IMR-90 (cell line): ENCODE measurements at regions of chr12 and their contacts with region 1.

Region 1: DNA sequence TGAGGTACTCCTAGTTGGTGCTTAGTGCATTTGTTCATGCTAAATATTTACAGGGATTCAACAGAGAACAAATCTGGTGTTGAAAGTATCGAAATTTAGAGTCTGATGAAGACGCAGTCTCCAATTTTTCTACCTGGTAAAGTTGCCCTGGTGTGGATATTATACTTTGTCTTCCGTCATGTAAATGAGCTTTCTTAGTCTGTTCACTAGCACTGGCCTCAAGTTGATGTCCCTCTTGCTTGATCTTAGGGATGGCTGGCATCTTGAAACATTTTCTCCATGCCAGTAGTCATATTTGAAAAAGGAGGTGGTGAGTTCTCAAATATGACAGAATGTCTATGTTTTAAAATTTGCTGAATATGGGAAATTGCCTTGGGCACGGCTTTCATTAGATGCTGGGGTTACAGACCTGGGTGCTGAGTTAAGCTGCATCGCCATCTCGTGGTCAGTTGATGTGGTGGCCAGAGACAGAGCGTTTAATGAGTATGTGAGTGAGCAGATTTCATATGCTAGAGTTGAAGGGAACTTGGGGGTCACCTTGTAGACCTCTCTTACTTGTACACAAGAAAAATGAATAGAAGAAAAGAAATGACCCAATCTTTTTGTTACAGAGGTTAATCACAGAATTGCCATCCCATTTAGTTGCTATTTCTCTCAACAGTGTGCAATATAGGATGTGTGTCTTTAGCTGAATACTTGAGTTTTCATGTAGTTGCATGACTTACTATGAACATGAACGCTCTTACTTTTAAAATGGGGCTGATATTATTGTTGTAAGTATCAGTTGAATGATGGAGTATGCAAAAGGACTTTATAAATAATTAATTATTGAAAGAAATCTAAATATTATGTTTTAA is 172.8 kb upstream of the DCN start:
- DNase-seq: peak; percentile 80
- ATAC-seq: peak; percentile 99
- H3K4me3 ChIP-seq: no peak overlapping the region
- H3K27ac ChIP-seq: no peak overlapping the region
- H3K4me1 ChIP-seq: no peaks in the 10 kb centered on the region
- H3K27me3 ChIP-seq: no peaks in the 10 kb centered on the region
- CTCF ChIP-seq: peak; percentile 96
- POLR2A ChIP-seq: no peak
- RAD21 ChIP-seq: peak; percentile 98

Region 2: GRCh38 chr12:90959538-90960139 is 395.7 kb before region 1 on chr12:
- CTCF ChIA-PET with region 1: interaction called, 4 read pairs
- POLR2A ChIA-PET with region 1: no interaction called
- dilution Hi-C with region 1: no loop called
- in situ Hi-C with region 1: no loop called
- intact Hi-C with region 1: loop called (anchors 1 kb)
- DNase-seq: peak; percentile 58
- ATAC-seq: peak; percentile 95
- H3K4me3 ChIP-seq: no peak overlapping the region
- H3K27ac ChIP-seq: no peak overlapping the region
- H3K4me1 ChIP-seq: no peaks in the 10 kb centered on the region
- H3K27me3 ChIP-seq: no peaks in the 10 kb centered on the region
- CTCF ChIP-seq: peak; percentile 71
- POLR2A ChIP-seq: no peak
- RAD21 ChIP-seq: peak; percentile 59

Region 3: GRCh38 chr12:90970473-90970872 is 384.9 kb before region 1 on chr12:
- CTCF ChIA-PET with region 1: interaction called, 5 read pairs
- POLR2A ChIA-PET with region 1: no interaction called
- dilution Hi-C with region 1: no loop called
- in situ Hi-C with region 1: loop called (anchors 5 kb)
- intact Hi-C with region 1: no loop called
- DNase-seq: peak; percentile 12
- ATAC-seq: no peak
- H3K4me3 ChIP-seq: no peak overlapping the region
- H3K27ac ChIP-seq: no peak overlapping the region
- H3K4me1 ChIP-seq: peaks cover 10% of the 10 kb centered on the region
- H3K27me3 ChIP-seq: no peaks in the 10 kb centered on the region
- CTCF ChIP-seq: no peak
- POLR2A ChIP-seq: no peak
- RAD21 ChIP-seq: no peak

Region 4: DNA sequence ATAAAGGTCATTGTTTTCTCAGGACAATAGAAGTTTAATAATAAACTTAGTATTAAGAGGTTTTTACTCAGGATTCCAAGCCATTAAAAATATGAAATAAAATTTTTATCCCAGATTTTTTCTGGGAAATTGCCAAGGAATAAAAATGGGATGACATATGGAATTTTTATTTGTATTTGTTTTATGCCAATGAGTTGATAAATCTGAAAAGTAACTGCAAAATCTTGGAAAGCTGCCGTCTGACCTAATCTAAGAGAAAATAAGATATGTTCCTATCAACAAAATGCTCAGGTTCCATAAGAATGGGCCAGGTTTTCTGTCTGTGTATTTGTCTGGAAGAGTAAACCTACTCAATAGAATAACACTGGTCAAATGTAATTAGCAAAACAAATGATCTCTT is 275.3 kb before region 1 on chr12:
- CTCF ChIA-PET with region 1: no interaction called
- POLR2A ChIA-PET with region 1: no interaction called
- dilution Hi-C with region 1: no loop called
- in situ Hi-C with region 1: no loop called
- intact Hi-C with region 1: no loop called
- DNase-seq: no peak
- ATAC-seq: no peak
- H3K4me3 ChIP-seq: no peak overlapping the region
- H3K27ac ChIP-seq: no peak overlapping the region
- H3K4me1 ChIP-seq: no peaks in the 10 kb centered on the region
- H3K27me3 ChIP-seq: no peaks in the 10 kb centered on the region
- CTCF ChIP-seq: no peak
- POLR2A ChIP-seq: no peak
- RAD21 ChIP-seq: no peak

Region 5: GRCh38 chr12:91250273-91250665 is 105.1 kb before region 1 on chr12:
- CTCF ChIA-PET with region 1: no interaction called
- POLR2A ChIA-PET with region 1: no interaction called
- dilution Hi-C with region 1: no loop called
- in situ Hi-C with region 1: no loop called
- intact Hi-C with region 1: no loop called
- DNase-seq: peak; percentile 58
- ATAC-seq: peak; percentile 61
- H3K4me3 ChIP-seq: no peak overlapping the region
- H3K27ac ChIP-seq: peak overlapping the region; percentile 55; the same call in 1 of the 2 replicates
- H3K4me1 ChIP-seq: peaks cover 3% of the 10 kb centered on the region; the same call in 1 of the 2 replicates
- H3K27me3 ChIP-seq: no peaks in the 10 kb centered on the region
- CTCF ChIP-seq: no peak
- POLR2A ChIP-seq: no peak
- RAD21 ChIP-seq: no peak